GM10248 (cell line): ENCODE measurements at regions of chr2 and their contacts with region 1.

Region 1: DNA sequence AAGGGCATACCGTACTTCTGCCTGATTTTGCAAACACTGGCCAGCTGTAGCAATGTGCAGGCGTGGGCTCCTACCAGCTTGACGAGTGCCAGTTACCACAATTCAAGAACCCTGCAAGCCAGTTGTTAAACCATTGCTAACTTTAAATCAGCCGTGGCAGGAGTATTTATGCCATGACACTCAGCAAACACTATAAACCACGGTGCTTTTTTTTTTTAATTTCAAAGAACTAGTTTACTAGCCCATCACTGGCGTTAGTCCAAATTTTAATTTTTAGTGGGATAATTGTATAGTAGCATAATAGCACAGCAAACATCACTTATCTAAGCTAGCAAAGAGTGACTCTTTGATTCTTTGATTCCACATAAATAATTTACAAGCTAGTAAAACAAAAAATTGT is 111.1 kb downstream of the COL4A4 start:
- DNase-seq: no peak
- CTCF ChIP-seq: no peak

Region 2: DNA sequence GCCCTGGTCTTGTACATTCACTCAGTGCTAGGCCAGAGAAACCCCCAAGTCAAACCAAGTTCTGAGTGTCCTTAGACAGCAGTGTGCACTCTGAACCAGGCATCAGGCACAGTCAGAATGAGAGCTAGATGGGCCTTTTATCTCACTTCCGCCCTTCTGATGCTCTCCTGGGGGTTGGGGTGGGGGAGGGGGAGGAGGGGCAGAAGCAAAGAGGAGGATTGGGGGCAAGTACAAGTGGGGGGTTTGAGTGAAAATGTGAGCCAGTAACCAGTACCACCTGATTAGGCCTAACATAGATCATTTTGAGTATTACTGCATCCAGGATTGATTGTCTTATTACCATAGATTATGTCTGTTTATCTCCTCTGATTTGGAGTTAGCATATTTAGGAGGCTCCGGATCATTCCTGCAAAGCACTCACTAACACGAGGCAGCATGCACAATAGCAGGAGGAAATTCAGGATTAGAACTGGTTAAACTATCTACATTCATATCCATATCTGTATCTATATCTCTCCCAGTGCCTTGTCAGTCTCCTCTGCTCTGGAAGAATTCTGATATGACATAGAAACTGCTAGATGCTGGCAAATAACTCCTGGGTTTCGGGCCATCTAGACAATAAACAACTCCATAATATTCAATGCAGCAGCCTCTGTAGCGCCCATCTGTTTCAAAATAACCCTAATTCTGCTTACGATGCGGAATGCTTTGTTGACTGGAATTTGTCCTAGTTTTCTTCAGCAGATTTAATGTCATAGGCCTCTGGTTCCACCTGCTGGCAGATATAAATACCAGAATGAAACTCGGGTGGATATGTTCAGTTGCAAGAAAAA is 67.9 kb before region 1 on chr2:
- CTCF ChIA-PET with region 1: no interaction called
- POLR2A ChIA-PET with region 1: no interaction called
- DNase-seq: peak; percentile 57
- CTCF ChIP-seq: peak; percentile 41

Region 3: GRCh38 chr2:227033471-227034148 is 19.3 kb before region 1 on chr2:
- CTCF ChIA-PET with region 1: interaction called, 10 read pairs
- POLR2A ChIA-PET with region 1: no interaction called
- DNase-seq: peak; percentile 60
- CTCF ChIP-seq: peak; percentile 78

Region 4: GRCh38 chr2:227117027-227117426 is 64.1 kb after region 1 on chr2:
- CTCF ChIA-PET with region 1: no interaction called
- POLR2A ChIA-PET with region 1: no interaction called
- DNase-seq: no peak
- CTCF ChIP-seq: no peak